ENCODE measurements at regions of chr13 and their contacts with region 1.

Region 1: GRCh38 chr13:29850224-29850898 is at the start of gene UBL3:
- DNase-seq: peak; percentile 88 to 96 (median 91)
- H3K4me3 ChIP-seq: peak within 1 kb of the TSS; percentile 81
- H3K4me3 Mint-ChIP-seq: peak within 1 kb of the TSS; percentile 90 to 100 (median 98)
- H3K27ac ChIP-seq: peak within 1 kb of the TSS; percentile 90
- H3K27ac Mint-ChIP-seq: peak within 1 kb of the TSS; percentile 91 to 100 (median 99)
- H3K4me1 ChIP-seq: peaks cover 13% of the 10 kb centered on the region
- H3K4me1 Mint-ChIP-seq: peaks cover 30 to 34% (median 30%) of the 10 kb centered on the region in 3 donors
- H3K27me3 ChIP-seq: no peaks in the 10 kb centered on the region
- H3K27me3 Mint-ChIP-seq: peaks cover 0 to 2% of the 10 kb centered on the region in 2 donors
- total RNA-seq, gene UBL3: 15.0 to 15.2 TPM

Region 2: GRCh38 chr13:28725046-28725445 is 1125.3 kb before region 1 on chr13:
- CTCF ChIA-PET with region 1: no interaction called
- POLR2A ChIA-PET with region 1: no interaction called
- DNase-seq: no peak
- H3K4me3 ChIP-seq: no peak overlapping the region
- H3K4me3 Mint-ChIP-seq: no peak overlapping the region
- H3K27ac ChIP-seq: no peak overlapping the region
- H3K27ac Mint-ChIP-seq: no peak overlapping the region
- H3K4me1 ChIP-seq: no peaks in the 10 kb centered on the region
- H3K4me1 Mint-ChIP-seq: no peaks in the 10 kb centered on the region
- H3K27me3 ChIP-seq: no peaks in the 10 kb centered on the region
- H3K27me3 Mint-ChIP-seq: peaks cover 8 to 30% of the 10 kb centered on the region in 2 donors

Region 3: GRCh38 chr13:29771247-29771646 is 79.1 kb before region 1 on chr13:
- CTCF ChIA-PET with region 1: interaction called, 11 read pairs
- POLR2A ChIA-PET with region 1: no interaction called
- DNase-seq: peak in 2 of 5 donors; percentile 39 to 51
- H3K4me3 ChIP-seq: no peak overlapping the region
- H3K4me3 Mint-ChIP-seq: no peak overlapping the region
- H3K27ac ChIP-seq: no peak overlapping the region
- H3K27ac Mint-ChIP-seq: no peak overlapping the region
- H3K4me1 ChIP-seq: no peaks in the 10 kb centered on the region
- H3K4me1 Mint-ChIP-seq: peaks cover 9 to 12% (median 9%) of the 10 kb centered on the region in 3 donors
- H3K27me3 ChIP-seq: no peaks in the 10 kb centered on the region
- H3K27me3 Mint-ChIP-seq: no peaks in the 10 kb centered on the region

Region 4: DNA sequence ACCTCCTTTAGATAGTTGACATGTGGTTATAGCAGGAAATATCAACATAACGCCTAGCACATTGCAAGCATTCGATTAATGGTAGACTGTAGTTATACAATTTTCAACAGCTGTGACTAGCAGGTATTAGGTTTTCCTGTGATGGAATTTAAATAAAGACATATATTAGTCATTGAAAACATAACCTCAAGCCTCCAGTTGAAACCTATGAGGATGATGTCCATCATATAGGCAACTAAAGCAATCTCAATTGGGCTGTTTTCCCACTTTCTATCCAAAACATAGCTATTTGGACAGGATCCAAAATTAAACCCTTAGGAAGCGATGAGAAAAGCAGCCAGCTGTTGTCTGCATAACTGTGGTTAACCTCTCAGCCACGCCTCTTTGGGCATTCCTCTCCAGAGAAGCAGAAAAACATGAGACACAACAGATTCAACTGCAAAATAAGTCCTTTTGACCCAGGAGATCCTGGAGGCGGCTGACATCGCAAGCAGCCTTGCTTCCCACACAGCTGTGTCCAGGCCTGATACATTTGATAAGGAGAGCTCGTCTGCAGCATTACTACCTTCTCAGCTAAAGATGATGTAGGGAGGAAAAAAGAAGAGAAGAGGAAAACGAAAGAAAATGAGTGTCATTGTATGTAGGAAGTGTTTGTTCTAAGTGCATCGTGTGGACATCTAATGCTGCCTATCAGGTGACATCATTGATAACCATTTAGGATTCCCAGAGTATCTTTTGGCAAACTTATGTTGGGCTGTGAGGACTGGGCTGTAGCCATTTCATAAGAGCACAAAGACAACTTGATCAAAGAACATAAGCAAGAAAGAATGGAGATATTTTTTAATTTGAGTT is 52.0 kb after region 1 on chr13:
- CTCF ChIA-PET with region 1: no interaction called
- POLR2A ChIA-PET with region 1: interaction called, 12 read pairs
- DNase-seq: peak; percentile 11 to 65 (median 15)
- H3K4me3 ChIP-seq: peak overlapping the region; percentile 47
- H3K4me3 Mint-ChIP-seq: peak overlapping the region; percentile 53 to 93 (median 90)
- H3K27ac ChIP-seq: no peak overlapping the region
- H3K27ac Mint-ChIP-seq: peak overlapping the region; percentile 43 to 99 (median 93)
- H3K4me1 ChIP-seq: peaks cover 19% of the 10 kb centered on the region
- H3K4me1 Mint-ChIP-seq: peaks cover 29 to 34% (median 30%) of the 10 kb centered on the region in 3 donors
- H3K27me3 ChIP-seq: no peaks in the 10 kb centered on the region
- H3K27me3 Mint-ChIP-seq: no peaks in the 10 kb centered on the region

Region 5: GRCh38 chr13:29923554-29924481 is 73.5 kb after region 1 on chr13:
- CTCF ChIA-PET with region 1: interaction called, 26 read pairs
- POLR2A ChIA-PET with region 1: interaction called, 4 read pairs
- DNase-seq: peak; percentile 23 to 74 (median 39)
- H3K4me3 ChIP-seq: no peak overlapping the region
- H3K4me3 Mint-ChIP-seq: peak overlapping the region in 1 of 7 donors; percentile 18
- H3K27ac ChIP-seq: no peak overlapping the region
- H3K27ac Mint-ChIP-seq: no peak overlapping the region
- H3K4me1 ChIP-seq: peaks cover 5% of the 10 kb centered on the region
- H3K4me1 Mint-ChIP-seq: peaks cover 7 to 52% (median 25%) of the 10 kb centered on the region in 3 donors
- H3K27me3 ChIP-seq: no peaks in the 10 kb centered on the region
- H3K27me3 Mint-ChIP-seq: peaks cover 0 to 2% of the 10 kb centered on the region in 2 donors

Region 6: GRCh38 chr13:29954082-29955028 is 104.0 kb after region 1 on chr13:
- CTCF ChIA-PET with region 1: interaction called, 4 read pairs
- POLR2A ChIA-PET with region 1: interaction called, 11 read pairs
- DNase-seq: peak; percentile 23 to 74 (median 55)
- H3K4me3 ChIP-seq: peak overlapping the region; percentile 40
- H3K4me3 Mint-ChIP-seq: peak overlapping the region; percentile 25 to 91 (median 84)
- H3K27ac ChIP-seq: no peak overlapping the region
- H3K27ac Mint-ChIP-seq: peak overlapping the region; percentile 41 to 94 (median 85)
- H3K4me1 ChIP-seq: peaks cover 44% of the 10 kb centered on the region
- H3K4me1 Mint-ChIP-seq: peaks cover 41 to 66% (median 53%) of the 10 kb centered on the region in 3 donors
- H3K27me3 ChIP-seq: no peaks in the 10 kb centered on the region
- H3K27me3 Mint-ChIP-seq: peaks cover 0 to 3% of the 10 kb centered on the region in 2 donors

Measured in CD8-positive, alpha-beta memory T cell (primary cell).